Tibial artery (tissue), 4 donors: ENCODE measurements at regions of chr6 and their contacts with region 1.

Region 1: DNA sequence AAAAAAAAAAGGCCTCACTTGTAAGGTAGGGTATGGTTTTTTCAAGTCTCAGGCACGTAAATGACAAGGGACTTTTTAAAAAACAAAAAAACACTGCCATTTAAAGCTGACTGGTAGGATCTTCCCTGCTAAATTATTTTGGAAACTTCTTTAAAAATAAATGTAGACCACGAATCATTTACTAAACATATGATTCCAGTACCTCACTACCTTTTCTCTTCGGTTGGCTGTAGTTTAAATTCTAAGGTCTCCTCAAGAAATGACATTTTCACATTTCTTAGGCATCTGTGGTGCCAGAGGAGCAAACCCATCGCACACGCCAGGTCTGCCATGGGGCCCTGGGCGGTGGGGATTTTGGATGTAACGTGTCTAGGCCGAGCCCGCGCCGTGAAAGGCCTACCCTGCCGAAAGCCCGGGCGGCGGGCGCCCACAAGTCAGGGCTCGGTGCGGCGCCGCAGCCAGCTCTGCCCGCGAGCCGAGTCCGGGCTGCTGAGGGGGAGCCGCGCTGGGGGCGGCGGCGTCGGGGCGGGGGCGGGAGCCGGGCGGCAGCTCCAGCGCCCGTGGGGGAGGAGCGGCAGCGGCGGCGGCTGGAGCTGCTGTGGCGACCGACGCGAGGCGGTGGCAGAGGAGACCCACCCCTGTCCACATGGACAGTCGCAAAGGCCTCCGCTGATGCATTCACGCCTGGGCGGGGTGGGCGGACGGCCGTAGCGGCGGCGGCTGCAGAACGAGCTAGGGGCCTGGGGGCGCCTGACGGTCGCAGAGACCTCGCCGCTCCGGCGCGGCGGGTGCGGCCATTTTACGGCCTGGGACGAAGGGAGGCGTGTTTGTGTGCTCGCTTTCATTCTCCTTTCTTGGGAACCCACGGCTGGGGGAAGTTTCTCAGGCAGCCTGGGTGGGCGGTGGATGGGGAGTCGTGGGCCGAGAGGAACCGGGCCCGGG is at the start of gene SENP6:
- DNase-seq: peak; percentile 75 to 90
- H3K4me3 ChIP-seq: peak within 1 kb of the TSS; percentile 86 to 89
- H3K27ac ChIP-seq: peak within 1 kb of the TSS; percentile 97 to 99
- H3K4me1 ChIP-seq: peaks cover 0 to 73% (median 22%) of the 10 kb centered on the region in 4 donors
- H3K27me3 ChIP-seq: no peaks in the 10 kb centered on the region
- CTCF ChIP-seq: no peak

Region 2: DNA sequence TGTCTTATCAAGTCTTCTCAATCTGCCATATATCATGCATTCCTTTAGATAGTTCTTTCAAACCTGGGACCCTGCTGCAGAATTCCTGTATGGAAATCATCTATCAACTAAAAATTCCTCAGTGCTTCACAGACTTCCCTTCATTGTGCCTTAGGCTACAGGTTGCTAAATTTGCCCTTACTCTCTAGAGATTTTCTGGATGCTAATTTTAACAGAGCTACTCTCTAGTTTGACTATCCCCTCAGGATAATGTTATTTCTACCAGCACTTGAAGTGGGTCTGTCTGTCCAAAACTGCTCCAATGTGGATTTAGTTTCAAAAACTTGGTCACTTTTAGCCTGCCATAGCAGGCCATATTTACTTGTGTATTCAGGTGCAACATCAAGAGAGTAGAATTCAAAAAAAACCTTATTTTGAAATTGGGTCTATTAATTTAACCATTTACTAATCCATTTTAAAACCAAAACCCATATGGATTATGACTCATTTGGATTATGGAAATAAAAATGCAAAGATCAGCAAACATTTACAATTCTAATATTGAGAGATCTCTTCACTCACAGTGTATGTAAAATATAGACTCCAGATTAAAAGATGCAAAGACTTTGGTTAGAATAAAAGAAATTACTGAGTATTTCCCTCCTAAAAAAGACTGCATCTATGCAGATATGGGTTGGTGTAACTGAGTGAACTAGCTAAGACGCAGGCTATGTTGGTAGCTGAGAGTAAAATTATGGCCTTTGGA is 344.1 kb before region 1 on chr6:
- intact Hi-C with region 1: no loop called
- DNase-seq: no peak
- H3K4me3 ChIP-seq: no peak overlapping the region
- H3K27ac ChIP-seq: no peak overlapping the region
- H3K4me1 ChIP-seq: no peaks in the 10 kb centered on the region
- H3K27me3 ChIP-seq: no peaks in the 10 kb centered on the region
- CTCF ChIP-seq: no peak

Region 3: DNA sequence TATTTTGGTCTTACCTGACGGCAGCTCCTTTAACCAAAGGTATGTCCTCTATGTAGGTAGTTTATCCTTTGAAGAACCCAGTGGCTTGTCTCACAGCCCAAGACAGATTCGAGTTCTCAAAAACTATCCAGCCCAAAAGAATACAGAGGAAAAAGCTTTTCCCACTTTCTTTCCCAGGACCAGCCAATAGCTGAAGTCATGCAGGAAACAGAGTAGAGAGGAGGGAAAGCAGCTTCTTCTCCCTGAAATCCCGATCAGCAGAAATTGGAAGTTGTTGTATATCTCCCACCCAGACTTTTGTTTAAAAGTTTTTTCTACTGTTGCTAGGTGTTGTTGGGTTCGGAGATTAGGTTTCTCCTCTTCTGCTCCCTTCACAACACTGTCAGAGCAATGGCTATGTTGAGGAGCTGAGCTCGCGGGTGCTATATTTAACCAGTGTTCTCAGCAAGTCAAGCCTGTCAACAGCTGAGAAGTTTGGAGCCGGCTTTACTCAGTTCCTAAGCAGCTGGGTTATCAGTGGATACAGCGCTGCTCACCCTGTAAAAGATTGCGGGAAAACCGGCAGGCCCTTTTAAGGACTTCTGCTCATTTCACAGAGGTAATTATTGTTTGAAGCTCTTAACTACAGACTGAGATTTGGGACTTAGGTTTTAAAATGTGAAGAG is 108.0 kb before region 1 on chr6 and contains the start of gene FILIP1:
- intact Hi-C with region 1: loop called (anchors 10 kb)
- DNase-seq: peak; percentile 80 to 81
- H3K4me3 ChIP-seq: peak within 1 kb of the TSS; percentile 50 to 55
- H3K27ac ChIP-seq: peak within 1 kb of the TSS; percentile 78 to 91
- H3K4me1 ChIP-seq: peaks cover 0 to 49% (median 9%) of the 10 kb centered on the region in 4 donors
- H3K27me3 ChIP-seq: no peaks in the 10 kb centered on the region
- CTCF ChIP-seq: no peak

Region 4: GRCh38 chr6:75633045-75633444 is 31.5 kb after region 1 on chr6:
- intact Hi-C with region 1: no loop called
- DNase-seq: no peak
- H3K4me3 ChIP-seq: no peak overlapping the region
- H3K27ac ChIP-seq: peak overlapping the region in 1 of 2 donors; percentile 5
- H3K4me1 ChIP-seq: peaks cover 0 to 30% (median 17%) of the 10 kb centered on the region in 4 donors
- H3K27me3 ChIP-seq: no peaks in the 10 kb centered on the region
- CTCF ChIP-seq: no peak